HCT116 (cell line): ENCODE measurements at regions of chr1 and their contacts with region 1.

Region 1: DNA sequence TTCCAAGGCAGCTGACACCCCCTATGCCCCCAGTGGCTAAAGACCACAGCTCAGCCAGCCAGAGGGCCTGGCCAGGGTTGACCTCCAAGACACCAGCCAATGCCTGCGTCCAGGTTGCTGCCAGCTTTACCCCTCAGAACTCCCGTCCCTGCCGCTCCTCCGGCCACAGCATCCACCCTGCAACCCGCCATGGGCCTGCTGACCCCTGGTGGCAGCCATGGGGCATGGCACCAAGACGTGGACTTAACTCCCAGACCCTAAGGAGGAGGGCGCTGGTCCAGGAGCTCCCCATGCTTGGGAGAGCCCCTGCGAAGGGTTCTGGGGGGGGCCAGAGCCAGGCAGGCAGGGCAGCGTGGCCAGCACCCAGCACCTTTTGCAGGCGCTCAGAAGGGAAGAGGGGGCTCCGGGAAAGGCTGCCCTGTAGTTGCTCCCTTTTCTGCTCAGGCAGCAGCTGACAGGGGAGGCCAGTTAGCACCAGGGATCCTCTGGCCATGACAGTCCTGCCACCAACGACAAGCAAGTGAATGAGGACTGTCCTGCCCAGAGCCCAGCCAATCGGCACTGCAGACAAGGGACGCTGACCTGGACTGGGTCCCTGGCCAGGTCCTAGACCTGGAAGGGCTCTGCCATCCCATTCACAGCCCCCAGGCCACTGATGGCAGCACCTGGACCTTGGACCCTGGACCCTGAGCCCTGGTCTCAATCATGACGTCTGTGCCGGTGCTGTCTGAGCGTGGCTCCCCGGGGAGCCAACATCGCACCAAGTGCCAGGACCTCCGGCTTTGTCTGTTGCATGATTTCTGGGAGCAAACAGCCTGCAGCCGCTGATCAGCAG is 246.2 kb downstream of the NPHP4 start:
- DNase-seq: peak; percentile 54
- ATAC-seq: peak; percentile 94
- H3K4me3 ChIP-seq: no peak overlapping the region
- H3K27ac ChIP-seq: no peak overlapping the region
- H3K4me1 ChIP-seq: no peaks in the 10 kb centered on the region
- H3K27me3 ChIP-seq: 0 out of 2 replicates have a peak, but pooled peaks cover 3% of the 10 kb centered on the region
- CTCF ChIP-seq: peak; percentile 94 to 99 (median 96)
- POLR2A ChIP-seq: no peak
- RAD21 ChIP-seq: peak; percentile 95

Region 2: GRCh38 chr1:3910857-3911845 is 1834.8 kb before region 1 on chr1:
- CTCF ChIA-PET with region 1: interaction called, 4 read pairs
- POLR2A ChIA-PET with region 1: no interaction called
- RAD21 ChIA-PET with region 1: no interaction called
- intact Hi-C with region 1: loop called (anchors 2 kb)
- DNase-seq: peak; percentile 54
- ATAC-seq: peak; percentile 93
- H3K4me3 ChIP-seq: peak overlapping the region in 1 of 2 experiments; percentile 40; a peak in 3 of 4 replicates
- H3K27ac ChIP-seq: no peak overlapping the region
- H3K4me1 ChIP-seq: peaks cover 2 to 9% of the 10 kb centered on the region in 2 experiments; a peak in 3 of 4 replicates
- H3K27me3 ChIP-seq: no peaks in the 10 kb centered on the region
- CTCF ChIP-seq: peak; percentile 62 to 90 (median 89); a peak in 5 of 6 replicates
- POLR2A ChIP-seq: no peak
- RAD21 ChIP-seq: peak; percentile 96

Region 3: GRCh38 chr1:5514519-5515183 is 231.3 kb before region 1 on chr1:
- CTCF ChIA-PET with region 1: interaction called, 29 read pairs
- POLR2A ChIA-PET with region 1: no interaction called
- RAD21 ChIA-PET with region 1: interaction called in 1 of 2 experiments, 3 read pairs
- intact Hi-C with region 1: loop called (anchors 1 kb)
- DNase-seq: peak; percentile 16
- ATAC-seq: peak; percentile 86
- H3K4me3 ChIP-seq: no peak overlapping the region
- H3K27ac ChIP-seq: no peak overlapping the region
- H3K4me1 ChIP-seq: no peaks in the 10 kb centered on the region
- H3K27me3 ChIP-seq: peaks cover 14% of the 10 kb centered on the region
- CTCF ChIP-seq: peak; percentile 60 to 100 (median 99); a peak in 5 of 6 replicates
- POLR2A ChIP-seq: no peak
- RAD21 ChIP-seq: peak; percentile 66

Region 4: GRCh38 chr1:5637171-5637570 is 108.8 kb before region 1 on chr1:
- CTCF ChIA-PET with region 1: interaction called, 25 read pairs
- POLR2A ChIA-PET with region 1: no interaction called
- RAD21 ChIA-PET with region 1: no interaction called
- intact Hi-C with region 1: loop called (anchors 1 kb)
- DNase-seq: peak; percentile 18
- ATAC-seq: peak; percentile 60; the same call in 1 of the 2 replicates
- H3K4me3 ChIP-seq: no peak overlapping the region
- H3K27ac ChIP-seq: no peak overlapping the region
- H3K4me1 ChIP-seq: peaks cover 0 to 2% of the 10 kb centered on the region in 2 experiments; a peak in 1 of 4 replicates
- H3K27me3 ChIP-seq: peaks cover 39% of the 10 kb centered on the region
- CTCF ChIP-seq: peak; percentile 58 to 75 (median 68); a peak in 5 of 6 replicates
- POLR2A ChIP-seq: no peak
- RAD21 ChIP-seq: peak; percentile 65

Region 5: GRCh38 chr1:5975133-5975880 is 229.3 kb after region 1 on chr1:
- CTCF ChIA-PET with region 1: no interaction called
- POLR2A ChIA-PET with region 1: no interaction called
- RAD21 ChIA-PET with region 1: interaction called in 1 of 2 experiments, 3 read pairs
- intact Hi-C with region 1: loop called (anchors 10 kb)
- DNase-seq: no peak
- ATAC-seq: peak; percentile 84
- H3K4me3 ChIP-seq: no peak overlapping the region
- H3K27ac ChIP-seq: no peak overlapping the region
- H3K4me1 ChIP-seq: peaks cover 2 to 28% of the 10 kb centered on the region in 2 experiments; a peak in 3 of 4 replicates
- H3K27me3 ChIP-seq: no peaks in the 10 kb centered on the region
- CTCF ChIP-seq: peak; percentile 47 to 75 (median 72); a peak in 5 of 6 replicates
- POLR2A ChIP-seq: no peak
- RAD21 ChIP-seq: peak; percentile 73